ENCODE measurements at regions of chr7 and their contacts with region 1.

Region 1: GRCh38 chr7:50317221-50317678 is 12.7 kb downstream of the IKZF1 start:
- DNase-seq: no peak
- H3K4me3 ChIP-seq: peak overlapping the region; percentile 0
- H3K27ac ChIP-seq: peak overlapping the region; percentile 10
- H3K4me1 ChIP-seq: peaks cover 73% of the 10 kb centered on the region
- CTCF ChIP-seq: peak; percentile 25; the same call in 1 of the 2 replicates

Region 2: DNA sequence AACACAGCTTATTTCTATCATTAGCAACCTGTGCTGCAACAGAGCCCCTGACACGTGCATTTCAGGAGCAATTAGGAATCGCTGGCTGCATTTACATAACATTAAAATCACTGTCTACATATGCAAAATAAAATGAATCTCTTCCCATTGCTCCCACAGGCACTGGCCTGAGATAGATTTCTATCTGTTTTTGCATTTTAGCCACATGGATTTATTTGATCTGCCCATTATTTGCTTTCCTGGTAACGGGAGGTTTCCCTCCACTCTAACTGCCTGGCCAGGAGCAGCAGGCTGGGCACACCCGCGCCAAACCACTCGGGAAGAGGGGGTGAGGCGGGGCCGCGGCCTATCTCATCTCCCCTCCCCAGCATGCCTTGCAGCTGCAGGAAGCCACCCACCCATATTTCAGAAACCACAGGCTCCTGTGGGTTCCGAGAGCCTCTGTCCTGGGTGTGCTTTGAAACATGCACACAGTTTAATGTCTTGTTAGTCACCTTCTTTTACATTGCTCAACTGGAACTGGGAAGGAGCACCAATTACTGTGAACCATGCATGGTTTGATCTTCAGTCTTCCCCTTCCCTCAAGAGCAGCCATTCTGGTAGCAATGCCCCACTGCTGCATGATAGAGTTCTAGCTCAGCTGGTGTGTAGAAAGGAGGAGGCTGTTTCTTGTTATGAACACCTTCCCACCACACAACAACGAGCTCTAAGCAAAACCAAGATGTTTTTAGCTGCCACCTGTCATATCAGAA is 50.4 kb before region 1 on chr7:
- CTCF ChIA-PET with region 1: no interaction called
- POLR2A ChIA-PET with region 1: interaction called, 20 read pairs
- intact Hi-C with region 1: no loop called
- DNase-seq: peak; percentile 76
- H3K4me3 ChIP-seq: peak overlapping the region; percentile 29
- H3K27ac ChIP-seq: peak overlapping the region; percentile 85
- H3K4me1 ChIP-seq: peaks cover 100% of the 10 kb centered on the region
- CTCF ChIP-seq: no peak

Measured in OCI-LY7 (cell line).